Esophagus muscularis mucosa (tissue), 4 donors: ENCODE measurements at regions of chr4 and their contacts with region 1.

Region 1: DNA sequence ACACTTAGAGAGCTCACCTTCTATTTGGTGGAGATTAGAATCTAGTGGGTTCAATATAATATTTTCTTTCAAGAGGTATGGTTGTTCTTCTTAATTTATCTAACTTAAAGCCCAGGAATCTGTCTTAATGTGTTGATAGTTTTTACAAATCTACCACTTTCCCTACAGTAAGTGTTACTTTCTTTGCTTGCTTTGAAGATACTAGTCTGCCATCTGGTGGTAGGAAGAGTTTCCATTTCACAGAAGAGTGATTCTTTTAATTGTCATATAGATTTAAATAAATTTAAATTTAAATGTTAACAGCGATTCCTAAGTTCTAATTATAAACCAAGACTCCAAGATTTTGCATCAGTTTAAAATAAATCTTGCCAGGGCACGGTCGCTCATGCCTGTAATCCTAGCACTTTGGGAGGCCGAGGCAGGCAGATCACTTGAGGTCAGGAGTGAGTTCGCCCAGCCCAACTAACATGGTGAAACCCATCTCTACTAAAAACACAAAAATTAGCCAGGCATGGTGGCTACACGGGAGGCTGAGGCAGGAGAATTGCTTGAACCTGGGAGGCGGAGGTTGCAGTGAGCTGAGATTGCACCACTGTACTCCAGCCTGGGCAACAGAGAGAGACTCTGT is 43.5 kb downstream of the NUDT9 start:
- DNase-seq: no peak
- H3K4me3 ChIP-seq: no peak overlapping the region
- H3K27ac ChIP-seq: peak overlapping the region in 2 of 4 donors; percentile 24 to 42
- H3K4me1 ChIP-seq: peaks cover 0 to 17% (median 9%) of the 10 kb centered on the region in 4 donors
- H3K27me3 ChIP-seq: no peaks in the 10 kb centered on the region
- CTCF ChIP-seq: peak; percentile 73 to 79 (median 75)
- EP300 ChIP-seq: no peak
- POLR2A ChIP-seq: no peak

Region 2: GRCh38 chr4:87375719-87376291 is 90.0 kb before region 1 on chr4:
- intact Hi-C with region 1: loop called (anchors 2 kb)
- DNase-seq: no peak
- H3K4me3 ChIP-seq: no peak overlapping the region
- H3K27ac ChIP-seq: peak overlapping the region in 2 of 4 donors; percentile 26 to 47
- H3K4me1 ChIP-seq: peaks cover 0 to 15% (median 8%) of the 10 kb centered on the region in 4 donors
- H3K27me3 ChIP-seq: no peaks in the 10 kb centered on the region
- CTCF ChIP-seq: peak; percentile 56 to 82 (median 67)
- EP300 ChIP-seq: no peak
- POLR2A ChIP-seq: no peak

Region 3: DNA sequence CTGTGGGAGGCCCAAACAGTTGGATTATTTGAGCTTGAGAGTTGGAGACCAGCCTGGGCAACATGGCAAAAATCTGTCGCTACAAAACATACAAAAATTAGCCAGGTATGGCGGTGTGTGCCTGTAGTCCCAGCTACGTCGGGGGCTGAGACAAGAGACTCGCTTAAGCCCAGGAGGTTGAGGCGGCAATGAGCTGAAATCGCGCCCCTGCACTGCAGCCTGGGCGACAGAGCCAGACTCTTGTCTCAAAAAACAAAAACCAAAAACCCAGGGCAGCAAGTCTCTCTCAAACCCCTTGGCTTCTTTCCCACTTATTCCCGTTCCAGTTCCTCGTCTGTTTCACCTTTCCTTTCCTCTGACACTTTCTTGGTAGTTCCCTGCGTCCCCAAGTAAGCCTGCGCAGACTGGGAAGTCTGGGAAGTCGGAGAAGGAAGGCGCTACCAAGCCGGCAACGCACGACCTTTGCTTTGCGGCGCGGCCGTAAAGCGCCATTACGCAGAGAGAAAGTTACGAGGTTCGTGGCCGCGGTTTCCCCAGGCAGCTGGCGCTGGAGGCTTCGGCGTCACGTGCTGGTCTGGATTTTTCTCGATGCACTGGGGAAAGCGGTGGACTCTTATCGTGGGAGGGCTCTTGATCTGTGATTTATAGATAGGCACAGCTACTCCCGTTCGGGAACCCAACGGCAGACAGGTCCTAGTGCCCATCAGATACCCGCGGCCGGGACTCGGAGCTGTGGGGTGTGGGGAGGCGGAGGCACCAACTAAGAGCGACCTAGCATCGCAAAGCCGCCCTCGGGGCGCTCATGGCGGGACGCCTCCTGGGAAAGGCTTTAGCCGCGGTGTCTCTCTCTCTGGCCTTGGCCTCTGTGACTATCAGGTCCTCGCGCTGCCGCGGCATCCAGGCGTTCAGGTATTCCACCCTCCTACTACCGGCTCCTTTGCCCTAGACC is 43.5 kb before region 1 on chr4 and contains the start of gene NUDT9:
- intact Hi-C with region 1: loop called (anchors 5 kb)
- DNase-seq: peak; percentile 97
- H3K4me3 ChIP-seq: peak within 1 kb of the TSS; percentile 62 to 83 (median 72)
- H3K27ac ChIP-seq: peak within 1 kb of the TSS; percentile 87 to 90 (median 88)
- H3K4me1 ChIP-seq: peaks cover 18 to 41% (median 38%) of the 10 kb centered on the region in 4 donors
- H3K27me3 ChIP-seq: no peaks in the 10 kb centered on the region
- CTCF ChIP-seq: peak in 1 of 3 experiments; percentile 5
- EP300 ChIP-seq: no peak
- POLR2A ChIP-seq: peak; percentile 30
- total RNA-seq, gene NUDT9: 15.1 to 26.6 (median 21.3) TPM